MCF 10A (cell line): ENCODE measurements at regions of chr5 and their contacts with region 1.

Region 1: DNA sequence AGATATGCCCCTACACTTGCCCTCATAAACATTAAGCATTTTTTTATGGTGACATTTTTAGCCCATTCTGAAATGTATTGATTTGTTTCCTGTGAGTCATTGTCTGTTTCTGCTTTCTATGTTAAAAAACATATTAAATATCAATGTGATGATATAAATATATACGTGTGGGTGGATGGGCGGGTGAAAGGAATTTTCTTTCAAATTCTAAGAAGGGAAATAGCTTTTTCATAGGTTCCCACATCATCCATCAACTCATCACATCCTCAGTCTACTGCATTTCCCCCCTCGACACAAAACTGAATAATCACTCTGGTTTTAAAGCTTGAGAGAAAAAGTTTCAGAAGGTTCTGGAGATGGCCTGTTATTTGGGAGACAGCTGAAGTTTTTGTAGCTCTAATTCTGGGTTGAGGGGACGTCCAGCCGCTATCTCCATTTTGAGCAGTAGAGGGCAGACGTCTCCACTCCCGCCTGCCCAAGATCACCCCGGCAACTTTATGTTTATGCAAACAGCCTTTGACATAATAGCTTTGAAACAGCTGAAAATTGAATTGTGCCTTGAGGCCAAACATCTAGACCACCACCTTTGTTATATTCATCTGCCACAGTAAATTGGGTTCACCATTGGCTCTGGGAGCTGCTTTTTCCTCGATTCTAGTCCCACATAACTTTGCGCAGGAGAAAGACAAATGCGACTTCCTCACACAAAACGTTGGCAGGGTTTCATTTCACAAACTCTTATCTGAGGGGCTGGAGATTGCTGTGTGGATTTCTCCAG is 216.2 kb upstream of the CLINT1 start:
- DNase-seq: peak; percentile 73
- H3K4me3 Mint-ChIP-seq: no peak overlapping the region
- H3K27ac Mint-ChIP-seq: peak overlapping the region; percentile 61
- H3K4me1 Mint-ChIP-seq: peaks cover 7% of the 10 kb centered on the region
- H3K27me3 Mint-ChIP-seq: no peaks in the 10 kb centered on the region
- CTCF ChIP-seq: peak; percentile 91

Region 2: GRCh38 chr5:157670662-157671591 is 404.3 kb before region 1 on chr5 and contains the start of gene C5orf52:
- CTCF ChIA-PET with region 1: no interaction called
- POLR2A ChIA-PET with region 1: no interaction called
- intact Hi-C with region 1: no loop called
- DNase-seq: no peak
- H3K4me3 Mint-ChIP-seq: peak within 1 kb of the TSS; percentile 59
- H3K27ac Mint-ChIP-seq: peak within 1 kb of the TSS; percentile 49
- H3K4me1 Mint-ChIP-seq: peaks cover 10% of the 10 kb centered on the region
- H3K27me3 Mint-ChIP-seq: peaks cover 29% of the 10 kb centered on the region
- CTCF ChIP-seq: no peak
- total RNA-seq, gene C5orf52: not detected in 2 replicates

Region 3: GRCh38 chr5:158020555-158021418 is 54.4 kb before region 1 on chr5:
- CTCF ChIA-PET with region 1: interaction called, 11 read pairs
- POLR2A ChIA-PET with region 1: interaction called, 3 read pairs
- intact Hi-C with region 1: no loop called
- DNase-seq: no peak
- H3K4me3 Mint-ChIP-seq: no peak overlapping the region
- H3K27ac Mint-ChIP-seq: no peak overlapping the region
- H3K4me1 Mint-ChIP-seq: peaks cover 15% of the 10 kb centered on the region
- H3K27me3 Mint-ChIP-seq: no peaks in the 10 kb centered on the region
- CTCF ChIP-seq: no peak

Region 4: GRCh38 chr5:158049459-158049858 is 25.7 kb before region 1 on chr5:
- CTCF ChIA-PET with region 1: interaction called, 14 read pairs
- POLR2A ChIA-PET with region 1: interaction called, 8 read pairs
- intact Hi-C with region 1: no loop called
- DNase-seq: no peak
- H3K4me3 Mint-ChIP-seq: no peak overlapping the region
- H3K27ac Mint-ChIP-seq: no peak overlapping the region
- H3K4me1 Mint-ChIP-seq: peaks cover 15% of the 10 kb centered on the region
- H3K27me3 Mint-ChIP-seq: no peaks in the 10 kb centered on the region
- CTCF ChIP-seq: no peak

Region 5: DNA sequence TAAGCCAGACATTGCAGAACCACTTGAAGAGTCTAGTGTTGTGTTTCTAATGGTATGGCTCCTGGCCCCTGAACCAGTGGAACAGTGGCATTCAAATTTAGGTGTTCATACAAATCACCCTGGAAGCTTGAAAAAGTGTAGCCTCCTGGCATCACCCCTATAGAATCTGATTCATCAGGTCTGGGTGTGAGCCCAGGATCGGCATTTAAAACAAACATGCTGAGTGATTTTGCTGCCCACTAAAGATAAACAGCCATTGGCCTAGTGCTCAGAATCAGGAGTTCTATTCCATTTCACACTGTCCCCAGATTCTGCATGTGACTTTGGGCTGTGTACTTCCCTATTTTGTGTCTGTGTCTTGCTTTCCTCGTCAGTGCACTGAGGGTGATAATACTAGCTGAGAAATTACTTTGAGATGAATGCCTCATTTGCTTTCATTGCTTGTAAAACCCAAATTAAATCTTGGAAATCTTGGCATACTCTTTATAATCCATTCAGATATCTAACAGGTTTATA is 25.2 kb after region 1 on chr5:
- CTCF ChIA-PET with region 1: interaction called, 44 read pairs
- POLR2A ChIA-PET with region 1: no interaction called
- intact Hi-C with region 1: no loop called
- DNase-seq: peak; percentile 55
- H3K4me3 Mint-ChIP-seq: no peak overlapping the region
- H3K27ac Mint-ChIP-seq: no peak overlapping the region
- H3K4me1 Mint-ChIP-seq: peaks cover 6% of the 10 kb centered on the region
- H3K27me3 Mint-ChIP-seq: no peaks in the 10 kb centered on the region
- CTCF ChIP-seq: no peak

Region 6: GRCh38 chr5:158170060-158170459 is 94.9 kb after region 1 on chr5:
- CTCF ChIA-PET with region 1: interaction called, 28 read pairs
- POLR2A ChIA-PET with region 1: interaction called, 3 read pairs
- intact Hi-C with region 1: loop called (anchors 1 kb)
- DNase-seq: no peak
- H3K4me3 Mint-ChIP-seq: no peak overlapping the region
- H3K27ac Mint-ChIP-seq: no peak overlapping the region
- H3K4me1 Mint-ChIP-seq: no peaks in the 10 kb centered on the region
- H3K27me3 Mint-ChIP-seq: no peaks in the 10 kb centered on the region
- CTCF ChIP-seq: no peak

Region 7: GRCh38 chr5:158786390-158786789 is 711.2 kb after region 1 on chr5:
- CTCF ChIA-PET with region 1: no interaction called
- POLR2A ChIA-PET with region 1: no interaction called
- intact Hi-C with region 1: no loop called
- DNase-seq: no peak
- H3K4me3 Mint-ChIP-seq: no peak overlapping the region
- H3K27ac Mint-ChIP-seq: no peak overlapping the region
- H3K4me1 Mint-ChIP-seq: no peaks in the 10 kb centered on the region
- H3K27me3 Mint-ChIP-seq: peaks cover 8% of the 10 kb centered on the region
- CTCF ChIP-seq: no peak

Region 8: GRCh38 chr5:159010661-159011442 is 935.7 kb after region 1 on chr5:
- CTCF ChIA-PET with region 1: no interaction called
- POLR2A ChIA-PET with region 1: no interaction called
- intact Hi-C with region 1: no loop called
- DNase-seq: no peak
- H3K4me3 Mint-ChIP-seq: no peak overlapping the region
- H3K27ac Mint-ChIP-seq: no peak overlapping the region
- H3K4me1 Mint-ChIP-seq: no peaks in the 10 kb centered on the region
- H3K27me3 Mint-ChIP-seq: no peaks in the 10 kb centered on the region
- CTCF ChIP-seq: no peak